HEK293T (cell line): ENCODE measurements at regions of chr7 and their contacts with region 1.

Region 1: DNA sequence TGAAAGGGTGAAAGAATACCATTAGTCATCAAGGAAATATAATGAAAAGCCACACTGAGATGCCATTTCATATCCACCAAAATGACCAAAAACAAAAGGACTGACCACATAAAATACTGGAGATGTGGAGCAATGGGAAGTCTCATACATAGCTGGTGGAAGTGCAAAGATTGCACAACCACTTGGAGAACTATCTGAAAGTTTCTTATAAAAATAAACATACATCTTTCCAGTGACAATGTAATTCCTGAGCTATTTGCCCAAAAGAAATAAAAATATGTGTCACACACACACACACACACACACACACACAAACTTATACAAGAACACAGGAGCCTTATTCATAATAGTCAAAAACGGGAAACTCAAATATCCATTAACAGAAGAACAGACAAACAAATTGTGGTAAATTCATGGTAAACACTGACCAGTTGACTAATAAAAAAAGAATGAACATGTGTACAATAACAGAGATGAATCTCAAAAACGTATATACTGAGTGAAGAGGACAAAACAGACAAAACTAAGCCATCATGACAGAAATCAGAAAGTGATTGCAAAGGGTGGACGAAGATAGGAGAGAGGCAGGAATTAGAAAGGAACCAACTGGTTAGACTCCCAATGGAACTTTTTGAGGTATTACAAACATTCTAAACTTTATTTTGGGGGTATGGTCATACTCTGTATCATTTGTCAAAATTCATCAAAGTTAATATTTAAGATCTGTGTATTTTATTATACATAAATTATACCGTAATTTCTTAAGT is 21.5 kb downstream of the WASL start:
- DNase-seq: no peak

Region 2: DNA sequence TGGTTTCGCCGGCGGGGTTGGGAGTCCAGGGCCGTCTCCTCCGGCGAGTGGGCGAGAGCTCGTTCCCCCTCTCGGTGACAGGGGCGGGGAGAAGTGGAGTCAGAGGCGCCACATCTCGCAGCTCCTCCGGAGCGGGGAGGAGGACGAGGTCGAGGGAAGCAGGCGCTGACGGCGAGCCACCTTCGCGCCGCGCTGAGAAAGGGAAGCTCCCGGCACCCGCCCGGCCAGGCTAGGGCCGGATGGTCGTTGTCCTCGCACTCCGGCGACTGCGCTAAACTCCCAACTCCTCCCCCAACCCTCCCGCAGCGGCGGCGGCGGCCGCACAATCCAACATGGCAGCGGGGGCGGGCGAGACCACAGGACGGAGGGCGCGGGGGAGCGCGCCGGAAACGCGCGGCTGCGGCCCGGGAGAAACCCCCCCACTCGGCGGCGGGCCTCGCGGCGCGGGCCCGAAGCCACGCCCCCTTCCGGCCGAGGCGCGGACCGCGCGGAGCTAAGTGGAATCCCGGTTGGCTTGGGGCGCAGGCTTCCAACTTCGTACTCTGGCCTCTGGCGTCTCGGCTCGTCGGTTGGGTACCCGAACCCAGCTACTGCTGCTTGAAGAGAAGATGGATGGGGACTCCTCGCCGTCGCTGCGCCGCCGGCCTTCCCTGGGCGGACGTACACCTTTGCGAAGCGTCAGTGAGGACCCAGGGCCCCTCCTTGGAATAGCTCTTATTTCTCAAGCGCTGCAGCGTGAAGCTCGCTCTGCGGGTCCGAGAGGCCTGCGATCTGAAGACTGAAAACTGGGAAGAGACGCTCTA is 21.7 kb after region 1 on chr7 and contains the start of gene WASL:
- CTCF ChIA-PET with region 1: interaction called, 4 read pairs
- POLR2A ChIA-PET with region 1: interaction called, 15 read pairs
- DNase-seq: peak; percentile 85